ENCODE measurements at regions of chr1 and their contacts with region 1.

Region 1: GRCh38 chr1:178109348-178110143 is 15.6 kb downstream of the RASAL2 start:
- DNase-seq: no peak
- ATAC-seq: no peak
- H3K4me3 ChIP-seq: no peak overlapping the region
- H3K27ac ChIP-seq: peak overlapping the region in 1 of 10 donors; percentile 16
- H3K4me1 ChIP-seq: peaks cover 0 to 39% (median 31%) of the 10 kb centered on the region in 9 donors
- H3K27me3 ChIP-seq: no peaks in the 10 kb centered on the region
- CTCF ChIP-seq: no peak

Region 2: DNA sequence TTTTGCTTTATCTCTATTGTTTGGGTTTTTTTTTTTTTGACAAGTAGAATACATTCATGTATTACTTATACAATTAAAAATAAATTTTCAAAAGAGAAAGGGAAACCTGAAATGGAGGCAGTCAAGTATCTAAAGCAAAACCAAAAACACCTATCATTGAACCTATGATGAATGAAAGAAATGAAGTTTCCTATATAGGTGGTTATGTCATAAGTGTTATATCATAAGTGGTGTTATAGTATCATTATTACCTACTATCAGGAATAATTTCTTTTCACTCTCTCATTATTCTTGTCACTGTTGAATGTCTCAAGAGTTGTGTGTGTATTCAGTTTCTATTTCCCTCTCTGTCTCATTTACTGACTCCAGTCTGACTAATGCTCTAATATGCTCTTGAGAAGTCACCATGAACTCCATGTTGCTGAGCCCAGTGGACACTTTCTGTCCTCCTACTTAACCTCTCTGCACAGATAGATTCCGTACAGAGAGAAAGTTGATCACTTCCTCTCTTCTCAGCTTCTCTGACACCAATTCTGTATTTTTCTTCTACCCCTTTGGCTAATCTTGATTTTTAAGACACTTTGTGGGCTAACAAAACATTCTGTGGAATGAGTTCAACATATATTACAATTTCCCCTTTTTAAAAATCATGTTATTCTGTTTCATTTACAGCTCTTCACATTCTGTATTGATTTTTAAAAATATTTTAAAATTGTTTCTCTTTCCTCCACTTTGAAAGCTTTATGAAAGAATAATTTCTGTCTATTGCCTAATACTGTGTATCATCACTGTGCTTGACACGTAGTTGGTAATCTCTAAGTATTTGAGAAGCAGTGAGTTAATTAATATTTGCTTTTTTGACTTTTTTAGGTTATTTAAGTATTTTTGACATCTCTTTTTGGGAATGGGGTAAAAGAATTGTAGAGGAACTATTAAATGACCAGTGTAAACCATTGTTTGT is 34.5 kb after region 1 on chr1:
- intact Hi-C with region 1: loop called in 2 of 10 experiments (anchors 5 kb)
- DNase-seq: no peak
- ATAC-seq: peak in 1 of 8 donors; percentile 41
- H3K4me3 ChIP-seq: no peak overlapping the region
- H3K27ac ChIP-seq: no peak overlapping the region
- H3K4me1 ChIP-seq: peaks cover 0 to 48% (median 7%) of the 10 kb centered on the region in 9 donors
- H3K27me3 ChIP-seq: no peaks in the 10 kb centered on the region
- CTCF ChIP-seq: no peak

Region 3: DNA sequence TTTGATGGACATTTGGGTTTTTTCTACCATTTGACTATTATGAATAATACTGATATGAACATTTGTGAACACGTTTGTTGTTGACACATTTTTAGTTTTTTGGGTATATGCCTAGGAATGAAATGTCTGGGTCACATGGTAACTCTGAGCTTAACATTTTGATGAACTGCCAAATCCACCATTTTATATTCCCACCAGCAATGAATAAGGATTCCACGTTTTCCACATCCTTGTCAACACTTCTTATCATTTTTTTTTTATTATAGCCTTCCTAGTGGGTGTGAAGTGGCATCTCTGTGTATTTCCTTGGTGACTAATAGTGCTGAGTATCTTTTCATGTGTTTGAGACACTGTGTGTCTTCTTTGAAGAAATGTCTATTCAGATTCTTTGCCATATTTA is 52.0 kb after region 1 on chr1:
- intact Hi-C with region 1: loop called in 1 of 10 experiments (anchors 5 kb)
- DNase-seq: no peak
- ATAC-seq: no peak
- H3K4me3 ChIP-seq: no peak overlapping the region
- H3K27ac ChIP-seq: no peak overlapping the region
- H3K4me1 ChIP-seq: peaks cover 0 to 25% (median 6%) of the 10 kb centered on the region in 9 donors
- H3K27me3 ChIP-seq: no peaks in the 10 kb centered on the region
- CTCF ChIP-seq: no peak